ENCODE measurements at regions of chr1 and their contacts with region 1.

Region 1: DNA sequence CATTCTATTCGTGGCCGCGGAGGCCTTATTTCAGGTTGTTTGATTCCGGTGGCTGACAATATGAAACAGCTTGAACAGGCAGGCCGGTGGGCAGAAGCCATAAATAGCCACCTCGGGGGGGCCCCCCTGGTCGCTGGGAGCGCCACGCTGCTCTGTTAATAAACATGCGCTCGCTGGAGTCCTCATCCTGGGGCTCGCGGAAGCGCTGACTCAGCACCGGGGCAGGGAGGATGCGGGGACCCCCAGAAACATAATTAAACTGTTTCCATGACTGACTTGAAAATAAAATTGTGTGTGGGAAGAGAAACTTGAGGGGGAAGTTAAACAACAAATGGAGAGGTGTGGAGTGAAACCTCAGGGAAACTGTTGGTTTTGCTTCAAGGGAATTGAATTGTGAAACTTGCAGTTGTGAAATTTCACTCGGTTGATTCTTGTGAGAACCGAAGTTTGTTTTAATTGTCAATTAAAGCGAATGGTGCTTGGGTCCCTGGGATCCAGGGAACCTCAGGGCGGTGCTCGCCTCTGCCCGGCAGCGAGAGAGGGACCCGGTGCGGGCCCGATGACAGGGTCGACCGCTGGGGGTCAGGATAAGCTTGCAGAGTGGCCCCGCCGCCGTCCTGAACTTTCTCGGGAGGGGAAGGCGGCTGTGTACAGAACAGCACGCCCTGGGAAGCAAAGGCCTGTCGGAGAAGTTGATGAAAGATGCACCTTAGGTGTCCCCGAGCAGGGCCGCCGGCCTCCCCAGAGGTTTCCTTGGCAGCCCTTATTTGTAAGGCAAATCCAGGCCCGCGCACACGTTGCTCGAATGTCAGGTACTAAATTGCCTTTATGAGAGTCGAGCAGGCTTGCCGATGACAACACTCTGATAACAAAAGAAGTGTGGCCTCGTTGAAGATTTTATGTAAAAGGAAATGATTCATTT is 176.9 kb upstream of the LMO4 start:
- DNase-seq: peak; percentile 58
- ATAC-seq: peak; percentile 93
- H3K4me3 ChIP-seq: peak overlapping the region; percentile 21; the same call in 1 of the 2 replicates
- H3K27ac ChIP-seq: peak overlapping the region; percentile 36
- H3K4me1 ChIP-seq: peaks cover 17% of the 10 kb centered on the region; the same call in 1 of the 2 replicates
- H3K27me3 ChIP-seq: peaks cover 2% of the 10 kb centered on the region; the same call in 1 of the 2 replicates
- CTCF ChIP-seq: peak; percentile 69
- POLR2A ChIP-seq: no peak
- RAD21 ChIP-seq: peak; percentile 77

Region 2: DNA sequence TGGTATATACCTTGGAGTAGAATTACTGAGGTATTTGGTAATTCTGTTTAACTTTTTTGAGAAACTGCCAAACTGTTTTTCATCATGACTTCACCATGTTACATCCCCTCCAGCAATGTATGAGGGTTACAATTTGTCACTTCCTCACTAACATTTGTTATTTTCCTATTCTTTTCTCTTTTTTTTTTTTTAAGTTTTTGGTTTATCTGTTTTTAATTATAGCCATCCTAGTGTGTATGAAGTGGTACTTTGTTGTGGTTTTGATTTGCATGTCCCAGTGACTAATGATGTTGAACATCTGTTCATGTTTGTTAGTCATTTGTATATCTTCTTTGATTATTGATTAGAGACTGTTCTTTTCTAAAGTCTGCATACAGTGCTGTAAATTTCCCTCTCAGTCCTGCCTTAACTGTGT is 90.0 kb before region 1 on chr1:
- CTCF ChIA-PET with region 1: no interaction called
- POLR2A ChIA-PET with region 1: no interaction called
- dilution Hi-C with region 1: no loop called
- in situ Hi-C with region 1: no loop called
- intact Hi-C with region 1: no loop called
- DNase-seq: peak; percentile 71
- ATAC-seq: no peak
- H3K4me3 ChIP-seq: no peak overlapping the region
- H3K27ac ChIP-seq: no peak overlapping the region
- H3K4me1 ChIP-seq: no peaks in the 10 kb centered on the region
- H3K27me3 ChIP-seq: no peaks in the 10 kb centered on the region
- CTCF ChIP-seq: no peak
- POLR2A ChIP-seq: no peak
- RAD21 ChIP-seq: no peak

Region 3: DNA sequence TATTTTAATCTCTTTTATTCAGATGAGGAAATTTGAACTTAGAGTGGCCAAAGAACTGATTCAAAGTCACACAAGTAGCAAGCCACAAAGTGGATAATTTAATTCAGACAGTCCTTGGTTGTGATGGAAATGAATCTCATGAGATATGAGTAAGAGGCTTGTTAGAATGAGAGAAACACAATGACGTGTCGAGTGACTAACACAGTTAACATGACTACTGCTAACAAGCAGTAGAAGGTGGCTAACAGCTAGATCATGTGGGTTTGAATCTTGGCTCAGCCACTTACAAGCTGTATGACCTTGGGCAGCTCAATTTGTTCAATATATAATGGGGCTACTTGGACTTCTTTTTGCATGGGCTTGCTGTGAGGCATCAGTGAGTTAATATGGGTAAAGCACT is 72.4 kb after region 1 on chr1:
- CTCF ChIA-PET with region 1: no interaction called
- POLR2A ChIA-PET with region 1: no interaction called
- dilution Hi-C with region 1: no loop called
- in situ Hi-C with region 1: no loop called
- intact Hi-C with region 1: loop called (anchors 5 kb)
- DNase-seq: peak; percentile 100
- ATAC-seq: peak; percentile 67
- H3K4me3 ChIP-seq: no peak overlapping the region
- H3K27ac ChIP-seq: no peak overlapping the region; the same call in 1 of the 2 replicates
- H3K4me1 ChIP-seq: peaks cover 13% of the 10 kb centered on the region
- H3K27me3 ChIP-seq: no peaks in the 10 kb centered on the region
- CTCF ChIP-seq: no peak
- POLR2A ChIP-seq: no peak
- RAD21 ChIP-seq: no peak

Region 4: DNA sequence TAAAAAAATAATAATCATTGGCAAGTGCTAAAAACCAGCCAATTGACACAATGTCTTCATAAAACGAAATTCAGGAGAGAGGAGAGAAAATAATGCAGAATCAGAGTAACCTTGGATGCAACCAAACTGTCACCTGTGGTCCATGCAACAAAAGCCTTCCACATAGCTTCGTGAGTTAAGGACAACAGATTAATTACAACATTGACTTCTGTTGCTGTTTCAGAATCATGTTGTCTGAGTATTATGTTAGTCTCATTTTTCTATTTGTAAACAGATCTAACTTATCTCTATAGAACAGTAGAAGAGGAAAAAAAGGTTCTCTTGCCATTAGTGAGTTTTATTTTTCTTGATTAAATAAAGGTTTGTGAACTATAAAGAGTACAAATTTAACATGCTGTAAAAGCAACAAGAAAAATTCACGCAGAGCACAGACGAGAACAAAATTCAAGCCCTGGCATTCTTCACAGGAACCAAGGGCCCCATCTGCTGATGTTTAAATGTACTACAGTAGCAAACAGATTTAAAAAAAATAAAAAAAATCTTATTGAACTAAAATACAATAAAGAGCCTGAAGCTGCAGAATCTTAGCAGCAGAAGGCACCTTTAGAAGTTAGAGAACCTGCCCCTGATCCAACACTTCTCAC is 1151.2 kb after region 1 on chr1:
- CTCF ChIA-PET with region 1: no interaction called
- POLR2A ChIA-PET with region 1: no interaction called
- dilution Hi-C with region 1: no loop called
- in situ Hi-C with region 1: no loop called
- intact Hi-C with region 1: loop called (anchors 5 kb)
- DNase-seq: peak; percentile 55
- ATAC-seq: peak; percentile 82
- H3K4me3 ChIP-seq: no peak overlapping the region
- H3K27ac ChIP-seq: no peak overlapping the region
- H3K4me1 ChIP-seq: no peaks in the 10 kb centered on the region
- H3K27me3 ChIP-seq: no peaks in the 10 kb centered on the region
- CTCF ChIP-seq: peak; percentile 65
- POLR2A ChIP-seq: no peak
- RAD21 ChIP-seq: peak; percentile 72

Measured in IMR-90 (cell line).